IMR-90 (cell line): ENCODE measurements at regions of chr6 and their contacts with region 1.

Region 1: GRCh38 chr6:5143634-5144311 is 58.6 kb downstream of the PPP1R3G start:
- DNase-seq: peak; percentile 77
- ATAC-seq: peak; percentile 94
- H3K4me3 ChIP-seq: no peak overlapping the region
- H3K27ac ChIP-seq: no peak overlapping the region
- H3K4me1 ChIP-seq: no peaks in the 10 kb centered on the region; the same call in 1 of the 2 replicates
- H3K27me3 ChIP-seq: no peaks in the 10 kb centered on the region
- CTCF ChIP-seq: peak; percentile 98
- POLR2A ChIP-seq: no peak
- RAD21 ChIP-seq: peak; percentile 99

Region 2: GRCh38 chr6:4313044-4313686 is 830.6 kb before region 1 on chr6:
- CTCF ChIA-PET with region 1: no interaction called
- POLR2A ChIA-PET with region 1: no interaction called
- dilution Hi-C with region 1: no loop called
- in situ Hi-C with region 1: no loop called
- intact Hi-C with region 1: loop called (anchors 2 kb)
- DNase-seq: peak; percentile 92
- ATAC-seq: peak; percentile 76
- H3K4me3 ChIP-seq: peak overlapping the region; percentile 1; the same call in 1 of the 2 replicates
- H3K27ac ChIP-seq: peak overlapping the region; percentile 46
- H3K4me1 ChIP-seq: peaks cover 12% of the 10 kb centered on the region
- H3K27me3 ChIP-seq: no peaks in the 10 kb centered on the region
- CTCF ChIP-seq: peak; percentile 88
- POLR2A ChIP-seq: peak; percentile 50; the same call in 1 of the 2 replicates
- RAD21 ChIP-seq: peak; percentile 99

Region 3: DNA sequence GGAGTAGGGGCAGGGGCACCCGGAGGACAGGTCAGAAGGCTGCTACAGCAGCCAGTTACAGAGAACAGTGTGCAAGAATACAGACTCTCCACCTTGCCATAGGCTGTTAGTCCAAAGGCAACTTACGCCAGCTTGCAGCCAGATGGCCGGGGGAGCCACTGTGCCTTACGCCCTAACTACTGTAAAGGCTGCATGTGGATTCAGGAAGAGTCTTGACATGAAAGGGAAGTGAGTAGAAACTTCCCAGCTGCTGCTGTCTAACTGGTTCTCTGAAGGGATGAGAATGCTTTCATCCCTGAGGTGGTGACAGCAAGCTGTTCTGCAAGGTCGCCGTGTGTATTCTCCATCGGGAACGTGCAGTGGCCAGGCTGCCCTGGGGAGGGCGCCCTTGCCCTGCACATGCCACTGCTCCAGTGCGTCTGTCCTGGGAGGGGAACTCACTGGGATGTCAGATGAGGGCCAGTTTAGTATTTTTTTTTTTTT is 70.8 kb after region 1 on chr6:
- CTCF ChIA-PET with region 1: interaction called, 15 read pairs
- POLR2A ChIA-PET with region 1: no interaction called
- dilution Hi-C with region 1: no loop called
- in situ Hi-C with region 1: no loop called
- intact Hi-C with region 1: loop called (anchors 1 kb)
- DNase-seq: peak; percentile 78
- ATAC-seq: peak; percentile 78
- H3K4me3 ChIP-seq: no peak overlapping the region
- H3K27ac ChIP-seq: no peak overlapping the region
- H3K4me1 ChIP-seq: peaks cover 8% of the 10 kb centered on the region; the same call in 1 of the 2 replicates
- H3K27me3 ChIP-seq: no peaks in the 10 kb centered on the region
- CTCF ChIP-seq: peak; percentile 69
- POLR2A ChIP-seq: no peak
- RAD21 ChIP-seq: peak; percentile 82

Region 4: DNA sequence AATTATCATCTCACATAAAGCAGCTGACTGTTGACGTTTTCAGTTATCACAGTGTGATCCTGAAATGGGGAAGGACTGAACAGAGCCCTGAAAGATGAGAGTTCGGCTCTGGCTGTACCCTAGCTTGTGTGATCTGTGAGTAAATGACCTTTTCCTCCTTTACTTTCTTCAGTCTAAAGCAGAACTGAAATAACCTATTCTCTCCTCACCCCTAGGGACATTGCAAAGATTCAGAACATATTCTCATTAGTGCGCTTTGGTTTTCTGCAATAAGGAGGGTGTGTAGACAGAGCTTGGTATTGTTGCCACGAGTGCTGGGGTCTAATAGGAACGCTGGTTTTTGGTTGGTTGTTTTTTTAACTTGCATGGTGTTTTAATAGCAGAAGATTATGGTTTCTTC is 134.3 kb after region 1 on chr6:
- CTCF ChIA-PET with region 1: interaction called, 3 read pairs
- POLR2A ChIA-PET with region 1: no interaction called
- dilution Hi-C with region 1: no loop called
- in situ Hi-C with region 1: no loop called
- intact Hi-C with region 1: loop called (anchors 5 kb)
- DNase-seq: no peak
- ATAC-seq: no peak
- H3K4me3 ChIP-seq: no peak overlapping the region
- H3K27ac ChIP-seq: no peak overlapping the region
- H3K4me1 ChIP-seq: peaks cover 4% of the 10 kb centered on the region
- H3K27me3 ChIP-seq: no peaks in the 10 kb centered on the region
- CTCF ChIP-seq: no peak
- POLR2A ChIP-seq: no peak
- RAD21 ChIP-seq: no peak

Region 5: GRCh38 chr6:5389086-5389745 is 245.4 kb after region 1 on chr6:
- CTCF ChIA-PET with region 1: interaction called, 10 read pairs
- POLR2A ChIA-PET with region 1: no interaction called
- dilution Hi-C with region 1: no loop called
- in situ Hi-C with region 1: loop called (anchors 5 kb)
- intact Hi-C with region 1: no loop called
- DNase-seq: no peak
- ATAC-seq: no peak
- H3K4me3 ChIP-seq: no peak overlapping the region
- H3K27ac ChIP-seq: no peak overlapping the region
- H3K4me1 ChIP-seq: no peaks in the 10 kb centered on the region
- H3K27me3 ChIP-seq: no peaks in the 10 kb centered on the region
- CTCF ChIP-seq: no peak
- POLR2A ChIP-seq: no peak
- RAD21 ChIP-seq: no peak

Region 6: GRCh38 chr6:6547110-6547879 is 1403.5 kb after region 1 on chr6:
- CTCF ChIA-PET with region 1: interaction called, 7 read pairs
- POLR2A ChIA-PET with region 1: no interaction called
- dilution Hi-C with region 1: no loop called
- in situ Hi-C with region 1: loop called (anchors 10 kb)
- intact Hi-C with region 1: loop called (anchors 1 kb)
- DNase-seq: peak; percentile 75
- ATAC-seq: peak; percentile 97
- H3K4me3 ChIP-seq: peak overlapping the region; percentile 16
- H3K27ac ChIP-seq: no peak overlapping the region
- H3K4me1 ChIP-seq: no peaks in the 10 kb centered on the region
- H3K27me3 ChIP-seq: peaks cover 5% of the 10 kb centered on the region; the same call in 1 of the 2 replicates
- CTCF ChIP-seq: peak; percentile 92
- POLR2A ChIP-seq: no peak
- RAD21 ChIP-seq: peak; percentile 91